Left ventricle myocardium superior (tissue), 1 donor: ENCODE measurements at regions of chr22 and their contacts with region 1.

Region 1: DNA sequence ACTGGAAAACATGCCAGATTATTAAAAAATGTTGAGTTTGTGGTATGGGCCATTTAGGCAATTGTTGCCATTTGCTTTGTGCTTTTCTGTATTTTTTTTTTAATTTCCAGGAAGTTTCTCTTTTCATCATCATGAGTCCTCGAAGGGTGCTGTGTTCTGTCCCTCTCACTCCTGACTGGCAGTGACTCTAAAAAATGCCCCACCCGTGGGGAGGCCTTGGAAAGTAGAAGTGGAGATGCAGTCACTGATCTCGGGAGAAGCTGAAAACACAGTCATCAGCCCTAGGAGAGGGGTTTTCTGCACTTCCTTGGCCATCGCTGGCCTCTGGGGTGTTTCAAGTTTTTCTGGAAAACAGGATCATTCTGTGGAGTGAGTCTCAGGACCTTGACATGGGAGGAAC is 98.5 kb upstream of the GRK3 start:
- DNase-seq: no peak
- ATAC-seq: no peak

Region 2: GRCh38 chr22:25702040-25702439 is 236.1 kb after region 1 on chr22:
- intact Hi-C with region 1: loop called (anchors 5 kb)
- DNase-seq: no peak
- ATAC-seq: peak; percentile 65

Region 3: GRCh38 chr22:25772288-25772687 is 306.3 kb after region 1 on chr22:
- intact Hi-C with region 1: loop called (anchors 2 kb)
- DNase-seq: no peak
- ATAC-seq: no peak